Naive thymus-derived CD8-positive, alpha-beta T cell (primary cell): ENCODE measurements at regions of chr1 and their contacts with region 1.

Region 1: GRCh38 chr1:42924082-42924850 is 34.4 kb downstream of the SLC2A1 start:
- DNase-seq: peak; percentile 83 to 97 (median 90)
- ATAC-seq: peak; percentile 90 to 91
- H3K4me3 Mint-ChIP-seq: peak overlapping the region; percentile 79 to 98 (median 93)
- H3K27ac Mint-ChIP-seq: peak overlapping the region; percentile 92 to 100 (median 98)
- H3K4me1 Mint-ChIP-seq: peaks cover 20 to 37% (median 33%) of the 10 kb centered on the region in 4 donors
- H3K27me3 Mint-ChIP-seq: no peaks in the 10 kb centered on the region

Region 2: GRCh38 chr1:42936309-42937078 is 12.2 kb after region 1 on chr1:
- POLR2A ChIA-PET with region 1: interaction called, 12 read pairs
- DNase-seq: no peak
- ATAC-seq: no peak
- H3K4me3 Mint-ChIP-seq: peak overlapping the region in 7 of 10 donors; percentile 41 to 70 (median 59)
- H3K27ac Mint-ChIP-seq: peak overlapping the region; percentile 88 to 99 (median 92)
- H3K4me1 Mint-ChIP-seq: peaks cover 68 to 99% (median 98%) of the 10 kb centered on the region in 4 donors
- H3K27me3 Mint-ChIP-seq: no peaks in the 10 kb centered on the region

Region 3: GRCh38 chr1:42952303-42953001 is 28.2 kb after region 1 on chr1:
- POLR2A ChIA-PET with region 1: interaction called, 24 read pairs
- DNase-seq: peak in 4 of 10 donors; percentile 34 to 73 (median 36)
- ATAC-seq: peak; percentile 72 to 74
- H3K4me3 Mint-ChIP-seq: peak overlapping the region; percentile 44 to 79 (median 65)
- H3K27ac Mint-ChIP-seq: peak overlapping the region; percentile 49 to 95 (median 83)
- H3K4me1 Mint-ChIP-seq: peaks cover 36 to 93% (median 92%) of the 10 kb centered on the region in 4 donors
- H3K27me3 Mint-ChIP-seq: no peaks in the 10 kb centered on the region

Region 4: GRCh38 chr1:42958488-42959319 is 34.4 kb after region 1 on chr1 and contains the start of gene SLC2A1:
- POLR2A ChIA-PET with region 1: interaction called, 24 read pairs
- DNase-seq: peak; percentile 88 to 98 (median 94)
- ATAC-seq: peak; percentile 81 to 87
- H3K4me3 Mint-ChIP-seq: peak within 1 kb of the TSS; percentile 94 to 100 (median 98)
- H3K27ac Mint-ChIP-seq: peak within 1 kb of the TSS; percentile 92 to 99 (median 98)
- H3K4me1 Mint-ChIP-seq: peaks cover 27 to 73% (median 59%) of the 10 kb centered on the region in 4 donors
- H3K27me3 Mint-ChIP-seq: no peaks in the 10 kb centered on the region
- polyA plus RNA-seq, gene SLC2A1: 17.7 to 22.8 (median 22.0) TPM

Region 5: GRCh38 chr1:42979896-42980800 is 55.9 kb after region 1 on chr1:
- POLR2A ChIA-PET with region 1: no interaction called
- DNase-seq: no peak
- ATAC-seq: no peak
- H3K4me3 Mint-ChIP-seq: no peak overlapping the region
- H3K27ac Mint-ChIP-seq: no peak overlapping the region
- H3K4me1 Mint-ChIP-seq: peaks cover 0 to 9% (median 3%) of the 10 kb centered on the region in 4 donors
- H3K27me3 Mint-ChIP-seq: no peaks in the 10 kb centered on the region

Region 6: DNA sequence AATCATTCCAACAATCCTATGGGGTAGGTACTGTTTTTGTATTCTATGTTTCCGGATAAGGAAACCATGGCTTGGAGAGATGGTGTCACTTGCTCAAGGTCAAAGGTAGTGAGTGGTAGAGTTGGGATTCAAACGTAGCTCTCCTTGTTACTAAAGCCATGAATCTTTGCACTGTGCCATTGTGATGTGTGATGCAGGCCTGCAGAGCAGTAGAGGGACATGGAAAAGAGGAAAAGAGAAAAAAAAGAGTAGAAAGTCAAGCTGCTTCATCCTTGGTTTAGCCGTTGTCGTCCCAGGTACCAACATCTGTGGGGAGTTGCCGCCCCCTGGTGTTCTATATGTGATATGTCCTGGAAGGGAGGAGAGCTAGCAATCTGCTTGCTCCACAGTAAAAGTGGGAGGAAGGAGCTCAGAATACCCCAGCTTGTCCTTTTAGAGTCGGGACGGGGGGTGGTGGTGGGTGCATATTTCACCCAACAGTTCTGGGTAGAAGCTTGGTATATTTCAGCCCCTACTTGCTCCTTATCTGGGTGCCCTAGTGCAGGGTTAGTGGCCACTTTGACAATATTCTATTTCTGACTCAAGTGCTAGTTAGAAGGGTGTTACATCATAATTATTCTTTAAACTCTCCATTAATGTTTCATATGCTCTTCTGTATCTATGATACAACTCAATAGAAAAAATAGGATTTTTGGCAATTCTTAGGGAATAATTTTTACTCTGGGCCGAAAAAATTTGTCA is 149.4 kb after region 1 on chr1:
- POLR2A ChIA-PET with region 1: interaction called, 25 read pairs
- DNase-seq: peak; percentile 51 to 88 (median 74)
- ATAC-seq: peak; percentile 80 to 97
- H3K4me3 Mint-ChIP-seq: peak overlapping the region in 1 of 10 donors; percentile 6
- H3K27ac Mint-ChIP-seq: peak overlapping the region in 6 of 10 donors; percentile 23 to 82 (median 53)
- H3K4me1 Mint-ChIP-seq: peaks cover 7 to 29% (median 12%) of the 10 kb centered on the region in 4 donors
- H3K27me3 Mint-ChIP-seq: no peaks in the 10 kb centered on the region